Cardiac septum (tissue), 1 donor: ENCODE measurements at regions of chr14 and their contacts with region 1.

Region 1: DNA sequence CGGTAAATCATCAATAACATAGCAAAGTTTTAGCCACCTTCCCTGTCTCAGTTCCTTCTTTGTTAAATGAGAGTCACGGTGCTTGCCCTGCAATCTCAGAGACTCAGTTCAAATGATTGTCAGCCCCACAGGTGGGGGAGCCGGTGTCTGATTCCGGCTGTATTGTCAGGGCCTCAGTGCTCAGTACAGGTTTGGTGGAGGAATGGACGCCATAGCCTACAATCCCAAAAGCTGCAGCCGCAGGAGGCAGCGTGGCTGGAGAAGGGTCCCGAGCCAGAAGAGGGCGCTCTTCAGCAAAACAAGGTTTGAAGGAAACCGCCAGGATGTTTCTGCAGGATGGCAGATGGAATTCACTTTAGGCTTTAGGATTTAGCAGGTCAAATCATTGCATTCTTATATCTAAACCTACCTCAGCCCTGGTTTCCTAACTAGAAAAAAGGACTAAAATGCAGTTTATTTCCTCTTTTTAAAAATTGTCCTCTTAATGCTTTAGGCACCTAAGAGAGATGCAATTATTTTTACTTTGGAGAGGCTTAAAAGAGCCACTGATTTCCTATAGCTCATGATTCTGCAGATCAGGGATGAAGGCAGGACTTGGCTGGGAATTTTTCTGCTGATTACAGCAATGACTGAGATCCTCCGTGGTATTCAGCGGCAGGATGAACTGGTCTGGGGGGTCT is 29.2 kb downstream of the FOS start:
- DNase-seq: peak; percentile 91

Region 2: DNA sequence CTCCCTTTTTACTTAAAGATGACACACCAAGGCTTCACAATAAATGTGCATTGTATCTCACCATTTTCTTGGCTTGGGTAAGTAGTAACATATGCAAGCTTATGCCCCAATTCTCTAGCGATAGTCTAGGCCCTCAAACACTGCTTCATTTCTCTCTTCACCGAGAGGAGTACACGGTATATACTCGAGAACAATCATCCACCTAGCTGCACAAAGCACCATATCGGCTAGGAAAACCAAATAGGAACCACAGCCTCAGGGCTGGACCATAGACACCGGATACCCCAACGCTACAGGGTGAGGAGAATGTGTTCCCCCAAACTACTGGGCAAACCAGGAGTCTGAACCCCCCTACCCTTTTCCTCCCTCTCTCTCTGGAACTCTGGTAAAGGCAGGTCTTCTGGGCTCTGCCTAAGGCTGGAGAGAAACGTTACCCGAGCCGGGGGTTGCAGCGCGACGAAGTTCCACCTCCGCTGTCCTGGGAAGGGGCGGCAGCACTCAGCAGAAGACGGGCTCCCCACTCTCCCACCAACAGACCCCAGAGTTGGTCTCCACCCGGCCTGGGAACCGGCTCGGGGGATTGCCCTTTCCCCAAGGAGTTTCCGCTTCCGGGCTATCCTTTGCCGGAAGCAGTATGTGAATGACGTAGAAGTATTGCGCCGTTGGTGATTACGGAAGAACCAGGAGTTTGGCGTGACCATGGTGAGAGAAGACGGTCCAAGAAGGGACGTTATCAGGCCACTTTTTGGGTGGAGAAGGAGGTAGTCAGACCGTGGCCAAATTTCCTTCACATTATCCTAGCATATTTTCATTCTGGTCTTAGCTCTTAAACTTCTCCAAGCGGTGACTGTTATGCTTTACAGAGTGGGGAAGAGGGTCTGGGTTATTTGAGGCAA is 595.1 kb before region 1 on chr14 and contains the starts of genes AREL1 and FCF1:
- intact Hi-C with region 1: no loop called
- DNase-seq: peak; percentile 92
- total RNA-seq, gene AREL1: 21.2 TPM
- total RNA-seq, gene FCF1: 36.6 TPM

Region 3: DNA sequence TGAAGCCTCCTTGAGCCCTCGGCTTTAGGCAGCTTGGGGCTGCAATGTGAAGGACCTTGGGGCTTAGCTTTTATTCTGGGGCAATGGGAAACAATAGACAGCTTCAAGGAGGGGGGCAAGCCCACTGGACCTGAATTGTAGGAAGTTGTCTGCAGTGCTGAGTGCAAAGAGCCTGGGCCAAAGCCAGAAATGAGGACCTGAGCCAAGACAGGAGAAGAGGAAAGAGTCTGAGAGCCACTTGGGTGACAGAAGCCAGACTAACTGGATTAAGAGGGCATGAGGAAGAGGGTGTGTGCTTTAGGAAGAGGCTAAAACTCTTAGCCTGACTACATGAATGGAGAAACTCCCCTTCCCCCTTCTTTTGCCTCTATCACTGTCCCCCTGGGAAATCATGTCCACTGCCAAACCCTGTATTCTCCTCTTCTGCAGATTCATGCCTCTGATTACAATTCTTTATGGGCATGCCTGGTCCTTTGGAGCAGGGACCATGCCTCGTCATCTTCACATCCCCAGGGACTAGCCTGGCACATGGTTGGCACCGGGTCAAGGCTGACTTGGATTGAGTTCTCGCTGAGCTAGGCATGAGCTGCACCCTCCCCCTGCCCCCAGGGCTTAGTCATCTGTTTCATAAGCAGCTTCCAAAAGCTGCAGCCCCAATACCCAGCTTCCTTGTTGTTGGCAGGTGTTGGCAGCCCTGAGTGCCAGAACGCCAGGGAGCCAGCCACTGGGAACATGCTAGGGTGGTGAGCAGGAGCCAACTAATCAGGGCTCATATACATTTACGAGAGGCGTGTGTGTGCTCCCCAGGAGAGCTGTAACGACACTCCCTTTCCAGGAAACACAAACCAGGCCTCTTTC is 92.2 kb after region 1 on chr14:
- intact Hi-C with region 1: loop called (anchors 5 kb)
- DNase-seq: peak; percentile 92

Region 4: GRCh38 chr14:75427482-75428229 is 119.8 kb after region 1 on chr14 and contains the start of gene JDP2:
- intact Hi-C with region 1: loop called (anchors 5 kb)
- DNase-seq: peak; percentile 98
- total RNA-seq, gene JDP2: 13.4 TPM

Region 5: GRCh38 chr14:75487155-75487671 is 179.4 kb after region 1 on chr14:
- intact Hi-C with region 1: loop called (anchors 1 kb)
- DNase-seq: no peak

Region 6: GRCh38 chr14:75560962-75561432 is 253.2 kb after region 1 on chr14:
- intact Hi-C with region 1: loop called (anchors 2 kb)
- DNase-seq: peak; percentile 85